ENCODE measurements at regions of chr4 and their contacts with region 1.

Region 1: GRCh38 chr4:177250056-177250696 is 59.5 kb upstream of the NEIL3 start:
- DNase-seq: peak; percentile 57 to 92
- H3K4me3 ChIP-seq: no peak overlapping the region
- CTCF ChIP-seq: peak in 1 of 3 donors; percentile 34
- POLR2A ChIP-seq: no peak

Region 2: DNA sequence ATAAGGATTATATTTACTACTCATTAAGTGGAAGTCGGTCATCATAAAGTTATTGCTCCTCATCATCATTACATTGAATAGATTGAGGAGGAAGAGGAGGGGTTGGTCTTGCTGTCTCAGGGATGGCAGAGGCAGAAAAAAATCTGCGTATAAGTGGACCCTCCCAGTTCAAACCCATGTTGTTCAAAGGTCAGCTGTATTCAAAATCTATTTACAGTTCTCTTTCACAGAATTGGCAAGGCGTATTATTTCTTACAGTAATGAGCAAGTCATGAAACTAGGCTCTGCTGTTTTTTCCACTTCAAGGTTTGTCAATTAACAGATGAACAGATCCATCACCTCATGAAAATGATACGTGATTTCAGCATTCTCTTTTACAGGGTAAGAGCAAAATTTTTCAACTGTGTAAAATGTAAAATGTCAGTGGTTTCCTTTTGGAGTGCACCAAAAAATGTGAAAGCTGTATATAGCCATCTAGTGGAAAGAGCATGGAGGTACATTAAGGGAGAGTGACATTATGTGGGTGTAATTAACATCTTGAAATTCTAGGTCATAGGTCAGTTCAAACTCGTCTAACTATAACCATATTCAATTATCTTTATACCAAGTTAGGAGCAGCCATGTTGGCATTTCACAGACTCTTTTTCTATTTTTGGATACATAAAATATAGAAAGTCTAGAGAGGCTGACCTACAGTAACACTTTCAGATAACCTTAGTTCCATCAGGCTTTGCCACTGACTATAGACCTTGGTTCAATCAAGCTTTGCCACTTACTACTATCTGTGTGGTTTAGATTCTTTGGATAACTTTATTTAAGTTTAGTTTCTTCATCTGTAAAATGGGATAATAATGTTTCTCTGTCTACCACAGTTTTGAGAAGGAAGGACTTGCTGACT is 89.5 kb after region 1 on chr4:
- intact Hi-C with region 1: loop called (anchors 10 kb)
- DNase-seq: no peak
- H3K4me3 ChIP-seq: no peak overlapping the region
- CTCF ChIP-seq: no peak
- POLR2A ChIP-seq: no peak

Measured in lower leg skin (tissue), 4 donors.